Activated naive CD4-positive, alpha-beta T cell treated with anti-CD3 and anti-CD28 coated beads for 36 hours (primary cell): ENCODE measurements at regions of chr20 and their contacts with region 1.

Region 1: DNA sequence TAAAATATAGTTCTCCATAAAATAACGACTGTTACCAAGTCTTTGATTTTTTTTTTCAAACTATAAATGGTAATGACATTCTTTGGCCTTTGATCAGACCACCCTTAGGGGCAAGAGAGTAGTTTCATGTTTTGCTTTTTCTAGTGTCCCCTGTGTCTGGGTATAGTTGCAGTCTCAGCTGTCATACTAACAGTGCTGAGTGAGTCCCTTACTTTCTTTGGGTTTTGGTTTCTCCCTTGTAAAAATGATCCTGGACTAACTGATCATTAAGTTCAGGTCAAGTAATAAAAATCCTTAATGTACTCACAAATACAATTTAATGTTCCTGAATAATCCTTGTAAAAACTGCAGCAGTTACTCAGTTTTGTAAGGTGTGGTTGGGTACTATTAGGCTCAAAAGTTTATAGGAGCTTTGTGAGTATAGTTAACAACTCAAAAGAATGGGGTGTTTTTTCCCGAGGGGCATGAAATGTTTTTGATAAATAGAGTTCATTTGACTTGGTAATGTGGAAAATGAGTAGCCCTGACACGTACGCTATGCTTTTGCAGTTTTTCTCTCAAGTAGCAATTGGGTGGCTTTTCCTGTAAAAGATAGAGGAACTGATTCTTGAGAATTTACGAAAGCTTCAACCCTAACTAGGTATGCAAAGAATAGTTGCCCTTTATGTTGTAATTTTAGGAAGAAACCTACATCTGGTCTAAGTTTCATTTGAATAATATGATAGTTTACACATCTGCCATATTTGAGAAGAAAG is 6.2 kb downstream of the PTPN1 start:
- DNase-seq: no peak
- H3K4me3 Mint-ChIP-seq: peak overlapping the region; percentile 59
- H3K27ac Mint-ChIP-seq: peak overlapping the region; percentile 97
- H3K4me1 Mint-ChIP-seq: peaks cover 84% of the 10 kb centered on the region
- H3K27me3 Mint-ChIP-seq: no peaks in the 10 kb centered on the region

Region 2: GRCh38 chr20:50278674-50279531 is 237.5 kb before region 1 on chr20:
- CTCF ChIA-PET with region 1: no interaction called
- intact Hi-C with region 1: no loop called
- DNase-seq: no peak
- H3K4me3 Mint-ChIP-seq: no peak overlapping the region
- H3K27ac Mint-ChIP-seq: no peak overlapping the region
- H3K4me1 Mint-ChIP-seq: no peaks in the 10 kb centered on the region
- H3K27me3 Mint-ChIP-seq: peaks cover 2% of the 10 kb centered on the region

Region 3: DNA sequence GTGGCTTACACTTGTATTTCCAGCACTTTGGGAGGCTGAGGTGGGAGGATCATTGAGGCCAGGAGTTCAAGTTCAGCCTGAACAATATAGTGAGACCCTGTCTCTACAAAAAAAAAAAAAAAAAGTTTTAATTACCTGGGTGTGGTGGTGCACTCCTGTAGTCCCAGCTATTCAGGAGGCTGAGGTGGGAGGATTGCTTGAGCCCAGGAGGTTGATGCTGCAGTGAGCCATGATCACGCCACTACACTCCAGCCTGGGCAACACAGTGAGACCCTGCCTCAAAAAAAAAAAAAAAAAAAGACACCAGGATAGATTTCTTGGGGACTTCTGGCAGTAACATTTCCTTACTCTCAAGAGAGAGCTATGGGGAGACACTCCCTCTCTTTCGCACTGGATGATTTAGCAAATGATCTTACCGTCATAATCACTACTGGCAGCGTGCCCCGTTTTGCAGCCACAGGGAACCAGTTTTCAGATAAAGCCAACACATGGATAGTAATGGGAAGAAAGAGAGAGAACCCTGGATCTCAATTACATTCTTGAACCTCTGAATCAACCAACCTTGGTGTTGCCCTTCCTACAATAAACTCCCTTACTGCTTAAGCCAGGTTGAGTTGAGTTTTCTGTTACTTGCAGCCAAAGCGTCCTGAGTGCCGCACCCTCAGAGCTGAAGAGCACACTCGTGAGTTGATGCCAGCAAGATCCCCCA is 24.3 kb before region 1 on chr20:
- CTCF ChIA-PET with region 1: interaction called, 4 read pairs
- intact Hi-C with region 1: loop called (anchors 1 kb)
- DNase-seq: no peak
- H3K4me3 Mint-ChIP-seq: no peak overlapping the region
- H3K27ac Mint-ChIP-seq: peak overlapping the region; percentile 91
- H3K4me1 Mint-ChIP-seq: peaks cover 29% of the 10 kb centered on the region
- H3K27me3 Mint-ChIP-seq: no peaks in the 10 kb centered on the region

Region 4: GRCh38 chr20:50546729-50547314 is 30.5 kb after region 1 on chr20:
- CTCF ChIA-PET with region 1: interaction called, 7 read pairs
- intact Hi-C with region 1: loop called (anchors 1 kb)
- DNase-seq: peak; percentile 63
- H3K4me3 Mint-ChIP-seq: peak overlapping the region; percentile 64
- H3K27ac Mint-ChIP-seq: peak overlapping the region; percentile 94
- H3K4me1 Mint-ChIP-seq: peaks cover 70% of the 10 kb centered on the region
- H3K27me3 Mint-ChIP-seq: no peaks in the 10 kb centered on the region

Region 5: DNA sequence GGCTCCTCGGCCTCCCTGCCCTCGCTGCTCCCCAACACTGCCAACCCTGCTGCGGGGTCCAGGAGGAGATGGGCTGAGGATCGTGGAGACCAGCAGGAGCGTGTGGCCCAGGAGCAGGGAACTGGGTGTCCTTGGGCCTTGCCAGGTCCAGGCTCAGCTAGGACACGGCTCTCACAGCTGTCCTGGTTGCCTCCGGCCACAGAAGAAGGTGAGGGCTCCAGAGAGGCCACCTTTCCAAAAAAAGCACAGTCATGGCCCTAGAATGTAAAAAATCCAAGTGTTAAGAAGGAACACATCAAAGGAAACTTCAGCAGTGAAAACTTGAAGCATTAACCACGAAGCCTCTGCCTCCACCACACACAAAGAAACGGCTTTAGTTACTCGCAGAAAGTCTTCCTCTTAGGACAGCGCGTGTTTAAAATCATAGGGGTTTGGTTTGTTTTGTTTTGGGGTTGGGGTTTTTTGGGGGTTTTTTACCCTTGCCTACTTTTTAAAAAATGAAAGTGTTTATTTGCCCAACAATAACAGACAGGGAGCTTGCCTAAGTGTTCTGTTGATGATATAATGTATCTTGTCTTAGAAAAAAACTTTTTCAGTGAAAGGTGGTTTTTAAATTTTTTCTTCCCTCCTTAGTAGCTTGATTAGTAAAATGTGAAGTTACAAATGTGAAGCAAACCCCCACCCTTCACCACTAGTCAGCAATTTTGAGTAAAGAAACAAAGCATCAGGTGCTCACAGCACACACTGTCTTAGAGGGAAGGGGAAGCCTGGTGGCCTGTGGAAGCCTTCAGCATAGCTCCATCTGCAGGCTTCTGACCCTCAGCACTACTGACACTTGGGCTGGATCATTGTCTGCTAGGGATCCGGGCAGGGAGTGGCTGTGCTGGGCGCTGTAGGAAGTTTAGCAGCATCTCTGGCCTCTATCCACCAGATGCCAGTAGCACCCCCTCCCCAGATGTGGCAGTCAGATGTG is 53.8 kb after region 1 on chr20:
- CTCF ChIA-PET with region 1: interaction called, 51 read pairs
- intact Hi-C with region 1: loop called (anchors 1 kb)
- DNase-seq: peak; percentile 83
- H3K4me3 Mint-ChIP-seq: peak overlapping the region; percentile 23
- H3K27ac Mint-ChIP-seq: peak overlapping the region; percentile 91
- H3K4me1 Mint-ChIP-seq: peaks cover 84% of the 10 kb centered on the region
- H3K27me3 Mint-ChIP-seq: no peaks in the 10 kb centered on the region